Prostate gland (tissue), 2 donors: ENCODE measurements at regions of chr5 and their contacts with region 1.

Region 1: GRCh38 chr5:93611976-93612854 is 29.2 kb downstream of the NR2F1 start:
- DNase-seq: no peak
- H3K4me3 ChIP-seq: no peak overlapping the region
- H3K27ac ChIP-seq: no peak overlapping the region
- H3K4me1 ChIP-seq: no peaks in the 10 kb centered on the region
- H3K27me3 ChIP-seq: peaks cover 8% of the 10 kb centered on the region
- CTCF ChIP-seq: no peak
- POLR2A ChIP-seq: no peak

Region 2: DNA sequence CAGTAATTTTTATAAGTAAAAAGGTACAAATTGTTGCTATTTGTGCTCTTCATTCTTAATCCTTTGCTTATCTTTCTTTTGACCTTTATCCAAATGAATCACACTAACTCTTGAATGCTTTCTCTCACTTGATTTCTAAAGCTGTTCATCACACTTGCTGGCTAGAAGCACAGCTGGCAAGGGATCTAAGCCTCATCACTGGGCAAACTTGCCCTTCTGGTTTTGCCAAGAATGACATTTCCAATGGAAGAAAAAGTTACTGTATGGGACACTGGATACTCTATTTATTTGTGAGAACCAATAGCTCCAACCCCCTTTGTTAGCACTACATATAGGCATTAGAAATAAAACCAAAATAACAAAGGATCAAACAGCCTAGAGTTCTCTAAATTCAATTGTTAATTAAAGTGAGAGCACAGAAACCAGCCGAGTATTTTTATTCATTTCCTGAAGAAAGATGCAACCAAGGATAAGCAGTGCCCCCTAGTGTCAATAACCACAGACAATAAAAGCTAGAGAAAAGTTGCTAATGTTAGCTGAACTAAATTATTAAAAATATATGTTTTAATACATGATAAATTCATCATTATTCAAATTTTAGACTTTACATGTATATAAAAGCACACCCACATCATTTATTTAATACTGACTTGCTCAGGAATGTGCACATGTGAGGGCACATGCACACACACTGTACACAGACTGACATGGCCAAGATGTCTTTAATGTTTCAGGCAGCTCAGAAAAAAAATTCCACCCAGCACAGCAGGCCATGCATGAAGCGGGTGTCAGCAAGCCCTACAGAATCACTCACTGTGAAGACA is 189.0 kb after region 1 on chr5:
- intact Hi-C with region 1: loop called (anchors 10 kb)
- DNase-seq: peak; percentile 41
- H3K4me3 ChIP-seq: no peak overlapping the region
- H3K27ac ChIP-seq: no peak overlapping the region
- H3K4me1 ChIP-seq: no peaks in the 10 kb centered on the region
- H3K27me3 ChIP-seq: no peaks in the 10 kb centered on the region
- CTCF ChIP-seq: peak in 3 of 4 experiments; percentile 67 to 73 (median 67)
- POLR2A ChIP-seq: no peak